PC-3 (cell line): ENCODE measurements at regions of chr13 and their contacts with region 1.

Region 1: GRCh38 chr13:66492479-66492878 is 737.7 kb downstream of the PCDH9 start:
- DNase-seq: peak; percentile 17
- ATAC-seq: peak; percentile 70
- H3K4me3 ChIP-seq: no peak overlapping the region
- H3K27ac ChIP-seq: no peak overlapping the region
- H3K4me1 ChIP-seq: no peaks in the 10 kb centered on the region
- H3K27me3 ChIP-seq: no peaks in the 10 kb centered on the region
- CTCF ChIP-seq: peak; percentile 53

Region 2: GRCh38 chr13:65985585-65985984 is 506.9 kb before region 1 on chr13:
- CTCF ChIA-PET with region 1: no interaction called
- POLR2A ChIA-PET with region 1: no interaction called
- intact Hi-C with region 1: no loop called
- DNase-seq: peak; percentile 34
- ATAC-seq: no peak
- H3K4me3 ChIP-seq: no peak overlapping the region
- H3K27ac ChIP-seq: no peak overlapping the region
- H3K4me1 ChIP-seq: no peaks in the 10 kb centered on the region
- H3K27me3 ChIP-seq: no peaks in the 10 kb centered on the region
- CTCF ChIP-seq: peak; percentile 48

Region 3: DNA sequence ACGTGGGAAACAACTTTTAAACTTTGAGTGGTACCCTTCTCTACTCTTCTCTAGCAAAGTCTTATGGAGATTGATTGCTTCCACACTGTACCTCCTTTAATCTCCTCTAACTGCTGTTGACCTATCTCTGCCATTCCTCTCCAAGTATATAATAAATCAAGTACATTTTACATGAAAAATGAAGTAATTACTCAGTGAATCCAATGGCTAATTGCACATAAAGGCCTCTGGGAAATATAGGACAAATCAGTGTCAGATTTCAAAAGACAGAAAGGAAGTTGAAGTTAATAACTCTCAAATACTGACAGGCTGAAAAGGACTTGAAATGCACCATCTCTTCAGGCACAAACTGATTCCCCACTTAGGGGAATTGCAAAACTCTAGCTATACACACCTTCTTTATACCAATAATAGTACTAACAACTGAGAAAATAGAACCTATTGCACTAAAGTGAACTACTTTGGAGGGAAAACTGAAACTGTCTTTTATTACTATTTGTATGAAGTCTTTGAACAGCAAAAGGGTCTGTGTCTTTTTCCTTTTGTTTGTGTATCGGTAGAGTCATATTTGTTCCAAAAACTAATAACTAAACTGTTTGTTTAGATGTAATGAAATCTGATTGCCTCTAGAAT is 36.6 kb after region 1 on chr13:
- CTCF ChIA-PET with region 1: no interaction called
- POLR2A ChIA-PET with region 1: no interaction called
- intact Hi-C with region 1: no loop called
- DNase-seq: no peak
- ATAC-seq: no peak
- H3K4me3 ChIP-seq: no peak overlapping the region
- H3K27ac ChIP-seq: no peak overlapping the region
- H3K4me1 ChIP-seq: no peaks in the 10 kb centered on the region; the same call in 1 of the 2 replicates
- H3K27me3 ChIP-seq: no peaks in the 10 kb centered on the region
- CTCF ChIP-seq: no peak

Region 4: DNA sequence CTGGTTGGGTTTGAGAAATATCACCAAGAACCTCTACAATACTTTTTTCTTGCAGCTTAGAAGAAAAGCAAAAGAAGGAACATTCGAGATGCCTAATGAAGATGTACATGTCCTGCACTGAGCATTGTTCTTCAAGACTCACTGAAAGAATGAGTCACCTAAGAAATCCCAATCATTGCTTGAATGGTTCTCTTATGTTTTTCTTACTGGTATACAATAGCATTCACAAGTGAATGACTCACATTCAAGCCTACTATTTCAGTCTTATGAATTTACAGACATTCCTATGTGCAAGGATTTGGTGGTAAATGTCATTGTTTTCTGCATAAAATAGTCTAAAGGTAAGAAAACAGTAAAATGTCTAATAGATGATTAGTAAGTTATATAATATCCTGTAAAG is 143.0 kb after region 1 on chr13:
- CTCF ChIA-PET with region 1: no interaction called
- POLR2A ChIA-PET with region 1: no interaction called
- intact Hi-C with region 1: no loop called
- DNase-seq: peak; percentile 69
- ATAC-seq: peak; percentile 100
- H3K4me3 ChIP-seq: no peak overlapping the region
- H3K27ac ChIP-seq: no peak overlapping the region
- H3K4me1 ChIP-seq: peaks cover 10% of the 10 kb centered on the region; the same call in 1 of the 2 replicates
- H3K27me3 ChIP-seq: no peaks in the 10 kb centered on the region
- CTCF ChIP-seq: no peak

Region 5: GRCh38 chr13:66689628-66690027 is 197.1 kb after region 1 on chr13:
- CTCF ChIA-PET with region 1: no interaction called
- POLR2A ChIA-PET with region 1: no interaction called
- intact Hi-C with region 1: loop called (anchors 5 kb)
- DNase-seq: peak; percentile 25
- ATAC-seq: peak; percentile 56
- H3K4me3 ChIP-seq: no peak overlapping the region
- H3K27ac ChIP-seq: no peak overlapping the region
- H3K4me1 ChIP-seq: no peaks in the 10 kb centered on the region
- H3K27me3 ChIP-seq: no peaks in the 10 kb centered on the region
- CTCF ChIP-seq: peak; percentile 35; the same call in 1 of the 2 replicates

Region 6: DNA sequence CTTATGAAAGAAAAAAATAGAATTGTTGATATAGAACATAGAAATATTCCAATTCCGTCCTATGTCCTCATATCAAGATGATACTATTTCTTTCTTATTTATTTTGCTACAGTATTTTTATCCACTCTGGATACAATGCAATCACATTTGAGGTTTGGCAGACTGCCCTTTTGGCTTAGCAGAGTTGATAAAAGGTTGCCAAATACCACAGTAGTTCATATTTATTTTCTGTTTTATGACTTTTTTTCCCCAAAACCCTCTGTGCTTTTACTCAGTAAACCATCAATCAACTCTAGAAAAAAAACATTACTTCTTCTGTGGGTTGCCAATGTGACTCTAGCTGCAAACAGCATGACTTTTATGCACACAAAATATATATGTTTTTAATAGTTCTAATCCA is 313.2 kb after region 1 on chr13:
- CTCF ChIA-PET with region 1: no interaction called
- POLR2A ChIA-PET with region 1: no interaction called
- intact Hi-C with region 1: no loop called
- DNase-seq: peak; percentile 38
- ATAC-seq: peak; percentile 41
- H3K4me3 ChIP-seq: no peak overlapping the region
- H3K27ac ChIP-seq: no peak overlapping the region
- H3K4me1 ChIP-seq: no peaks in the 10 kb centered on the region
- H3K27me3 ChIP-seq: no peaks in the 10 kb centered on the region
- CTCF ChIP-seq: no peak

Region 7: GRCh38 chr13:67238277-67238859 is 745.9 kb after region 1 on chr13:
- CTCF ChIA-PET with region 1: no interaction called
- POLR2A ChIA-PET with region 1: no interaction called
- intact Hi-C with region 1: loop called (anchors 2 kb)
- DNase-seq: peak; percentile 63
- ATAC-seq: 0 out of 2 replicates have a peak, but pooled peaks have one; percentile 35
- H3K4me3 ChIP-seq: no peak overlapping the region
- H3K27ac ChIP-seq: no peak overlapping the region
- H3K4me1 ChIP-seq: no peaks in the 10 kb centered on the region
- H3K27me3 ChIP-seq: no peaks in the 10 kb centered on the region
- CTCF ChIP-seq: peak; percentile 64